CD4-positive, alpha-beta memory T cell (primary cell): ENCODE measurements at regions of chr15 and their contacts with region 1.

Region 1: DNA sequence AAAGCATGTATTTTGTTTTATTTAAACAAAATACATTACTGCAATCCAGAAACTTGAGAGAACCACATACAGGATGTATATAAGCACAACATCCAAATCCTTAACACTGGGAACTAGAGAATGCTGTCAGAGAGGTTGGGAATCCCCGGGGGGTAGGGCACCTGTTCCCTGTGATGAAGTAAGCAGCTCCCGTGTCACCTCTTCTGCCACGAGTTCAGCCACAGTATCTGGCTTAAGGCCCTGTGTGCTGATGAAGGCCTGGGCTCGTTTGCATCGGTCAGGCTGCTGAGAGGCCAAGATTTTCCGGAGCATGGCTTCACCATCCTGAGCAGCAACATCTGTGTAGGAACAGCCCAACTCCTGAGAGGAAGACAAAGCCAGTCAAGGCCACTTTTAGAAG is 36.4 kb downstream of the EIF3J start:
- DNase-seq: no peak
- H3K4me3 ChIP-seq: no peak overlapping the region
- H3K4me3 Mint-ChIP-seq: no peak overlapping the region
- H3K27ac ChIP-seq: no peak overlapping the region
- H3K27ac Mint-ChIP-seq: no peak overlapping the region
- H3K4me1 ChIP-seq: peaks cover 3% of the 10 kb centered on the region
- H3K4me1 Mint-ChIP-seq: peaks cover 5 to 17% (median 10%) of the 10 kb centered on the region in 4 donors
- H3K27me3 ChIP-seq: no peaks in the 10 kb centered on the region
- H3K27me3 Mint-ChIP-seq: no peaks in the 10 kb centered on the region

Region 2: DNA sequence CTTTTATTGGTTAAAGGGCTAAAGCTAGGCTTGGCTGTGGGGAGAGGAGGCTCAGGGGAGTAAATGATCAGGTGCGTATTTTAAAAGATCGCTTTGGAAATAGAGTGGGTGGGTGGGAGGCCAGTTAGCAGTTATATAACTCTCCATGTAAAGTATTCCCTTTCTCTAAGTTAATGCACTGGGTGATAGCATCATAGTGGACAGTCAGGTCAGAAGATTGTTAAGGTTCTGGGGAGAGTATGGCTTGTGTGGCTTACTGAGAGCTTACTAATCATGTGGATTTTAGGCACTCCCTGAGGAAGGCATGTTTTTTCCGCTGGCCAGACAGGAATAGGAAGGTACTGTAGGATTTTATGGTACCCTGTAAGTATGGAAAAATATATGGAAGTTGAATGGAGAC is 42.7 kb before region 1 on chr15:
- CTCF ChIA-PET with region 1: no interaction called
- POLR2A ChIA-PET with region 1: no interaction called
- intact Hi-C with region 1: no loop called
- DNase-seq: no peak
- H3K4me3 ChIP-seq: no peak overlapping the region
- H3K4me3 Mint-ChIP-seq: peak overlapping the region in 1 of 8 donors; percentile 13
- H3K27ac ChIP-seq: no peak overlapping the region
- H3K27ac Mint-ChIP-seq: peak overlapping the region in 4 of 7 donors; percentile 24 to 82 (median 62)
- H3K4me1 ChIP-seq: peaks cover 12% of the 10 kb centered on the region
- H3K4me1 Mint-ChIP-seq: peaks cover 10 to 24% (median 18%) of the 10 kb centered on the region in 4 donors
- H3K27me3 ChIP-seq: no peaks in the 10 kb centered on the region
- H3K27me3 Mint-ChIP-seq: no peaks in the 10 kb centered on the region

Region 3: GRCh38 chr15:44545913-44546802 is 27.2 kb before region 1 on chr15:
- CTCF ChIA-PET with region 1: interaction called, 19 read pairs
- POLR2A ChIA-PET with region 1: interaction called, 6 read pairs
- intact Hi-C with region 1: no loop called
- DNase-seq: peak in 3 of 5 donors; percentile 19 to 54 (median 29)
- H3K4me3 ChIP-seq: no peak overlapping the region
- H3K4me3 Mint-ChIP-seq: peak overlapping the region in 6 of 8 donors; percentile 21 to 80 (median 56)
- H3K27ac ChIP-seq: peak overlapping the region; percentile 23
- H3K27ac Mint-ChIP-seq: peak overlapping the region; percentile 30 to 79 (median 57)
- H3K4me1 ChIP-seq: peaks cover 67% of the 10 kb centered on the region
- H3K4me1 Mint-ChIP-seq: peaks cover 46 to 78% (median 59%) of the 10 kb centered on the region in 4 donors
- H3K27me3 ChIP-seq: no peaks in the 10 kb centered on the region
- H3K27me3 Mint-ChIP-seq: no peaks in the 10 kb centered on the region

Region 4: GRCh38 chr15:44554934-44555723 is 18.3 kb before region 1 on chr15:
- CTCF ChIA-PET with region 1: interaction called, 14 read pairs
- POLR2A ChIA-PET with region 1: no interaction called
- intact Hi-C with region 1: no loop called
- DNase-seq: peak in 2 of 5 donors; percentile 16 to 21
- H3K4me3 ChIP-seq: peak overlapping the region in 1 of 2 donors; percentile 13
- H3K4me3 Mint-ChIP-seq: peak overlapping the region in 7 of 8 donors; percentile 6 to 66 (median 41)
- H3K27ac ChIP-seq: no peak overlapping the region
- H3K27ac Mint-ChIP-seq: peak overlapping the region; percentile 14 to 85 (median 75)
- H3K4me1 ChIP-seq: peaks cover 34% of the 10 kb centered on the region
- H3K4me1 Mint-ChIP-seq: peaks cover 25 to 46% (median 37%) of the 10 kb centered on the region in 4 donors
- H3K27me3 ChIP-seq: no peaks in the 10 kb centered on the region
- H3K27me3 Mint-ChIP-seq: no peaks in the 10 kb centered on the region

Region 5: GRCh38 chr15:44584162-44584749 is 10.9 kb after region 1 on chr15:
- CTCF ChIA-PET with region 1: interaction called, 97 read pairs
- POLR2A ChIA-PET with region 1: no interaction called
- intact Hi-C with region 1: no loop called
- DNase-seq: peak; percentile 46 to 53 (median 52)
- H3K4me3 ChIP-seq: no peak overlapping the region
- H3K4me3 Mint-ChIP-seq: no peak overlapping the region
- H3K27ac ChIP-seq: no peak overlapping the region
- H3K27ac Mint-ChIP-seq: peak overlapping the region in 6 of 7 donors; percentile 12 to 86 (median 62)
- H3K4me1 ChIP-seq: peaks cover 2% of the 10 kb centered on the region
- H3K4me1 Mint-ChIP-seq: peaks cover 5 to 19% (median 12%) of the 10 kb centered on the region in 4 donors
- H3K27me3 ChIP-seq: no peaks in the 10 kb centered on the region
- H3K27me3 Mint-ChIP-seq: no peaks in the 10 kb centered on the region

Region 6: GRCh38 chr15:44918136-44918535 is 344.8 kb after region 1 on chr15:
- CTCF ChIA-PET with region 1: interaction called, 3 read pairs
- POLR2A ChIA-PET with region 1: no interaction called
- intact Hi-C with region 1: loop called (anchors 5 kb)
- DNase-seq: no peak
- H3K4me3 ChIP-seq: no peak overlapping the region
- H3K4me3 Mint-ChIP-seq: no peak overlapping the region
- H3K27ac ChIP-seq: no peak overlapping the region
- H3K27ac Mint-ChIP-seq: no peak overlapping the region
- H3K4me1 ChIP-seq: no peaks in the 10 kb centered on the region
- H3K4me1 Mint-ChIP-seq: no peaks in the 10 kb centered on the region
- H3K27me3 ChIP-seq: no peaks in the 10 kb centered on the region
- H3K27me3 Mint-ChIP-seq: no peaks in the 10 kb centered on the region

Region 7: DNA sequence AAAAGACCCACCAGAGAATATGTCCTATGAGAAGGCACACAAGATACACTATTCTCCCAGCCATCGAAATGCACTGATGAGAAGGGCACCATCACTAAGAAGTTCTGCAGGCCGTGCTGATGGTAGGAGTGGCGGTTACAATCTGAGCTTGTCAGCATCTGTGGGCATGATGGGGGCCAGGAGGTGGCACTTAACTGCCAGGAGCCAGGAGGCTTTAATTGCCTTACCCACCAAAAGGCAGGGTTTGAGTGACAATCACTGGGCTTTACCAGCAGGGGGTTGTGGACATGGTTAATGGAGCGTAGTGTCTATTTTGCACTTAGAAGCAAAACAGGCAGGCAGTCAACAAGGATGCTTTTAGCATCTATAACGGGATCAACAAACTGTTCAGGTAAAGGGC is 1045.4 kb after region 1 on chr15:
- CTCF ChIA-PET with region 1: no interaction called
- POLR2A ChIA-PET with region 1: no interaction called
- intact Hi-C with region 1: no loop called
- DNase-seq: no peak
- H3K4me3 ChIP-seq: no peak overlapping the region
- H3K4me3 Mint-ChIP-seq: no peak overlapping the region
- H3K27ac ChIP-seq: no peak overlapping the region
- H3K27ac Mint-ChIP-seq: peak overlapping the region in 2 of 7 donors; percentile 36 to 62
- H3K4me1 ChIP-seq: no peaks in the 10 kb centered on the region
- H3K4me1 Mint-ChIP-seq: no peaks in the 10 kb centered on the region
- H3K27me3 ChIP-seq: no peaks in the 10 kb centered on the region
- H3K27me3 Mint-ChIP-seq: no peaks in the 10 kb centered on the region